Gastrocnemius medialis (tissue), 4 donors: ENCODE measurements at regions of chr1 and their contacts with region 1.

Region 1: GRCh38 chr1:119675349-119676345 is 27.6 kb upstream of the ZNF697 start:
- DNase-seq: peak; percentile 57 to 71
- ATAC-seq: peak; percentile 83 to 90
- H3K4me3 ChIP-seq: peak overlapping the region; percentile 32 to 46 (median 42)
- H3K27ac ChIP-seq: peak overlapping the region in 1 of 4 donors; percentile 34
- H3K4me1 ChIP-seq: no peaks in the 10 kb centered on the region
- H3K27me3 ChIP-seq: no peaks in the 10 kb centered on the region
- CTCF ChIP-seq: peak; percentile 75 to 90 (median 87)
- POLR2A ChIP-seq: no peak

Region 2: GRCh38 chr1:119140177-119141019 is 535.2 kb before region 1 on chr1 and contains the start of gene WARS2:
- in situ Hi-C with region 1: no loop called
- intact Hi-C with region 1: loop called (anchors 10 kb)
- DNase-seq: peak; percentile 96
- ATAC-seq: peak; percentile 99
- H3K4me3 ChIP-seq: peak within 1 kb of the TSS; percentile 75 to 79 (median 78)
- H3K27ac ChIP-seq: peak within 1 kb of the TSS; percentile 88 to 96 (median 94)
- H3K4me1 ChIP-seq: peaks cover 24 to 29% of the 10 kb centered on the region in 2 donors
- H3K27me3 ChIP-seq: no peaks in the 10 kb centered on the region
- CTCF ChIP-seq: no peak
- POLR2A ChIP-seq: peak; percentile 74 to 81
- total RNA-seq, gene WARS2: 5.8 to 16.5 (median 6.5) TPM

Region 3: DNA sequence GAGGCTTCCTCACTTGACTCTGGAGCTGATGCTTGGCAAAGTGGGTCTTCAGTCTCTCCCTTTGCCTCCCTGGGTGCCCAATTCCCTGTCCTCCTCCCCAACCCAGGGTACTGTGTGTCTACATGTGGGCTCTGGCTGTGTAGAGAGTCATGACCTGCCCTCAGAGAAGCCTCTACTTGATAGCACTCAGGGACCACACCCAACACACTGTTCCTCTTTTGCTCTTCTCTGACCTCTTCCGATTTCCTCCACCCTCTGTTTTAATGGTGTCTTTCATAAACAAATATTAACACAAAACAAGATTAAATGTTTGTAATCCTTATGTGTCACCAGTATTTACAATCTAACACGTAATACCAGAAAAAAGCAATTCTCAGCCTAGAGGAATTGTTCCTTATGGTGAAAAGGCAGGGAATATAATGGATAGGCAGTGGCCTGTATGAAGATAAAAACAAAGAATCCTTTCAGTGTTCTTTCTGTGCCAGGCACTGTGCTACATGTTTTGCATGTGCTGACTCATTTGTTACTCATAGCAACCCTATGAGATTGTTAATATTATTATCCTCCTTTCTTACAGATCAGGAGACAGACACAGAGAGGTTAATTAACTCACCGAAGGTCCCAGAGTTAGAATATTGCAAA is 110.4 kb before region 1 on chr1:
- in situ Hi-C with region 1: no loop called
- intact Hi-C with region 1: no loop called
- DNase-seq: no peak
- ATAC-seq: no peak
- H3K4me3 ChIP-seq: no peak overlapping the region
- H3K27ac ChIP-seq: no peak overlapping the region
- H3K4me1 ChIP-seq: no peaks in the 10 kb centered on the region
- H3K27me3 ChIP-seq: no peaks in the 10 kb centered on the region
- CTCF ChIP-seq: no peak
- POLR2A ChIP-seq: no peak

Region 4: DNA sequence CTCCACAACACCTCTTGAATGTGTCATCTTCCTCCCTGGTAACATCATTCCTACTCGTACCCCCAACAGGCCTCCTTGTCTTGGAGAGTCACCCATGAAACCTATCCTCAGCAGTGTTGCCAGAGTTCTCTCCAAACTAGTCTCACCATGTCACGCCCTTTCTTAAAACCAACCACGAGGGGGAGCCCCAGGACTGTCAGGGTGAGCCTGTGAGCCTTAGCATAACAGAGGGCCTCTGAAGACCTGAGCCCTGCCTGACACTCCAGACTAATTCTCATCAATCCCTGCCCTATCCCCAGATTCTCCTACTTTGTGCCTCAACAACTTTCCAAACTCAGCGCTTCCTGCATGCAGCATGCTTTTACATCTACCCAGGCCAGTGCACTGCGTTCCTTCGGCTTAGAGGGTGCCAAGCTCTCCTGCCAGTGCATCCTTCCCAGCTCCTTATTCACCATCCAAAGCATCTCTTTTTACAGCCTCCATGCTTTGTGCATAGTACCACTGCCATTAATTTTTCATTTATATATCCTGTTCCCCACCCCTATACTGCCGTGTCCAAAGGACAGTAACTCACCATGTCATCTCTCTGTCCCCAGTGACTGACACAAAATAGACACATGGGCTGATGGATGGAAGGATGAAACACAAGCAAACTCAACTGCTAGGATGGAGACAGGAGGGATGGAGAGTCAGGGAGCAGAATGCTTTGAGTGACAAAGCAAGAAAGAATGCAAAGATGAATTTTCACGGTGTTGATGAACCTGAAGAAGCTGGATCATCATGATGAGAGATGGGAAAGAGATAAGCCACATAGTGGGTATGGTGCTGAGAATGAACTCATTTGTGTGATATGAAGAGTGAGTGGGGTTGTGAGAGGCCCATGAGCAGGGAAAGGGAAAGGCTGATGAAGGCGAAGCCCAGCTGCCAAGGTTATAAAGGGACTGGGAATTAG is 61.6 kb before region 1 on chr1:
- in situ Hi-C with region 1: loop called in 2 of 4 experiments (anchors 5 to 10 kb)
- intact Hi-C with region 1: loop called (anchors 1 kb)
- DNase-seq: peak; percentile 63 to 77
- ATAC-seq: peak; percentile 89 to 95
- H3K4me3 ChIP-seq: no peak overlapping the region
- H3K27ac ChIP-seq: no peak overlapping the region
- H3K4me1 ChIP-seq: peaks cover 9 to 11% of the 10 kb centered on the region in 2 donors
- H3K27me3 ChIP-seq: no peaks in the 10 kb centered on the region
- CTCF ChIP-seq: peak; percentile 62 to 94 (median 83)
- POLR2A ChIP-seq: no peak

Region 5: DNA sequence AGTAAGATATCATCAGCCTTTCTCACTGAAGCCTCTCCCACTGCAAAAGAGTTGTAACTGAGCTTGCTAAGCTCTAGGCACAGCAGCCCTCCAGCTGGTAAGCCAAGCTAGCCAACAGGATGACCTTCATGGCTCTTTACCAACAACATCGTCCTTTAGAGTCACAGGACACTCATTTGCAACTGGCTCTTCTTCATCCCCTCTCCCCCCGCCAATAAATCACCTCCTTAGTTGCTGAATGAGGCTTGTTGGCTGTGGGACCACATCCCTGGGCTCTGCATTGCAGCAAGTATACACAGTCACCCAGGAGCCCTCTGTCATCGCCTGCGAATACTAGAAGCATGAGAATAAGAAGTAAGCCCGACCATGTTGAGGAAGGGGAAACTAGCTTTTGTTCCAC is 11.6 kb before region 1 on chr1:
- in situ Hi-C with region 1: no loop called
- intact Hi-C with region 1: no loop called
- DNase-seq: no peak
- ATAC-seq: peak; percentile 61 to 70
- H3K4me3 ChIP-seq: no peak overlapping the region
- H3K27ac ChIP-seq: no peak overlapping the region
- H3K4me1 ChIP-seq: peaks cover 0 to 4% of the 10 kb centered on the region in 2 donors
- H3K27me3 ChIP-seq: no peaks in the 10 kb centered on the region
- CTCF ChIP-seq: no peak
- POLR2A ChIP-seq: no peak